ENCODE measurements at regions of chr12 and their contacts with region 1.

Region 1: DNA sequence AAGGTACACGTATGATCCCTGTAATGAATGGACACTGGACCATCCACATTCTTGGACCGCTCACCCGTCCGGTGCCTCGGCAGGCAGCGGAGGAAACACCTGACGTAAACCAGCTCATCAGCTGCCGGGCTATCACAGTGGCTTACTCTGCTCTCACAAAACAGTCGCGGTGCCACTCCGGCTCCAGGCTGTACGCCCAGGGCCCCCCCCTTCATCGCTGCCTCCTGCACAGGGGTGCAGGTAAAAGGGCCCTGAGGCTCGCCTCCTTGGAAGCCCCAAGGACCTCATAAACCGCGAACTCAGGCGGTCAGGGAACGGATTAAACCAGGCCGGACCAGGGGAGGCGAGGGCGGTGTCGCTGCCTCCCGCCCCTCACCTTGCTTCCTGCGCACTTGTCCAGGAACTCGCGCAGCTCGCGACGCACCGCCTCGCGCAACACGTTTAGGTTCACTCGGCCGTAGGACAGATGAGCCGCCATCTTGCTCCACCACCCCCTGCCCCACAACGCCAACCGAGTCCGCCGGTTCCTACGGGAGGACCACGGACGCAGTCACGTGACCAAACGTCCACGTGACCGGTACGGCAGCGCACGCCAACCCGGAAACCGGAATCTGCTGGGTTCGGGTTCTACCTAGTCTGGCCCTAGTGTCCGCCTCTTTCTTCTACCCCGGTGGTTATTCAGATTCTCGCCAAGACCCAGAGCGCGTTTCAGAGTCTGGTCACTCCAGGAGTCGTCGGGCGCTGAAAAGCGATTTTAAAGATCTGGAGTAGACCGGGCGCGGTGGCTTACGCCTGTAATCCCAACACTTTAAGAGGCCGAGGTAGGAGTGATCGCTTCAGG is at the start of gene VPS33A:
- DNase-seq: peak; percentile 92 to 97 (median 94)
- H3K4me3 ChIP-seq: peak within 1 kb of the TSS; percentile 75 to 94 (median 91)
- H3K4me3 Mint-ChIP-seq: peak within 1 kb of the TSS; percentile 96 to 97
- H3K27ac ChIP-seq: peak within 1 kb of the TSS; percentile 91
- H3K27ac Mint-ChIP-seq: peak within 1 kb of the TSS; percentile 95 to 98 (median 97)
- H3K4me1 ChIP-seq: peaks cover 19 to 22% of the 10 kb centered on the region in 2 donors
- H3K4me1 Mint-ChIP-seq: peaks cover 19% of the 10 kb centered on the region
- H3K27me3 ChIP-seq: no peaks in the 10 kb centered on the region
- H3K27me3 Mint-ChIP-seq: peaks cover 0 to 3% (median 0%) of the 10 kb centered on the region in 3 donors
- CTCF ChIP-seq: no peak
- polyA plus RNA-seq, gene VPS33A: 15.3 to 33.1 (median 32.9) TPM

Region 2: GRCh38 chr12:122500685-122501488 is 234.7 kb after region 1 on chr12 and contains the start of gene ZCCHC8:
- intact Hi-C with region 1: loop called in 1 of 2 experiments (anchors 10 kb)
- DNase-seq: peak; percentile 97 to 98 (median 97)
- H3K4me3 ChIP-seq: peak within 1 kb of the TSS; percentile 71 to 99 (median 78)
- H3K4me3 Mint-ChIP-seq: peak within 1 kb of the TSS; percentile 95 to 98
- H3K27ac ChIP-seq: peak within 1 kb of the TSS; percentile 84 to 99
- H3K27ac Mint-ChIP-seq: peak within 1 kb of the TSS; percentile 95 to 99 (median 99)
- H3K4me1 ChIP-seq: peaks cover 32 to 50% of the 10 kb centered on the region in 2 donors
- H3K4me1 Mint-ChIP-seq: peaks cover 41% of the 10 kb centered on the region
- H3K27me3 ChIP-seq: no peaks in the 10 kb centered on the region
- H3K27me3 Mint-ChIP-seq: peaks cover 0 to 2% (median 0%) of the 10 kb centered on the region in 3 donors
- CTCF ChIP-seq: no peak
- polyA plus RNA-seq, gene ZCCHC8: 2.5 to 25.4 (median 5.4) TPM

Measured in CD14-positive monocyte (primary cell).